ENCODE measurements at regions of chr12 and their contacts with region 1.

Region 1: GRCh38 chr12:12776261-12776660 is 9.2 kb upstream of the APOLD1 start:
- DNase-seq: no peak
- ATAC-seq: 0 out of 2 replicates have a peak, but pooled peaks have one; percentile 44
- H3K4me3 ChIP-seq: no peak overlapping the region
- H3K27ac ChIP-seq: no peak overlapping the region
- H3K4me1 ChIP-seq: peaks cover 11% of the 10 kb centered on the region
- H3K27me3 ChIP-seq: no peaks in the 10 kb centered on the region
- CTCF ChIP-seq: no peak

Region 2: GRCh38 chr12:12474931-12475795 is 301.1 kb before region 1 on chr12:
- CTCF ChIA-PET with region 1: no interaction called
- POLR2A ChIA-PET with region 1: no interaction called
- in situ Hi-C with region 1: no loop called
- intact Hi-C with region 1: no loop called
- DNase-seq: no peak
- ATAC-seq: no peak
- H3K4me3 ChIP-seq: no peak overlapping the region
- H3K27ac ChIP-seq: no peak overlapping the region
- H3K4me1 ChIP-seq: no peaks in the 10 kb centered on the region
- H3K27me3 ChIP-seq: no peaks in the 10 kb centered on the region
- CTCF ChIP-seq: no peak

Region 3: DNA sequence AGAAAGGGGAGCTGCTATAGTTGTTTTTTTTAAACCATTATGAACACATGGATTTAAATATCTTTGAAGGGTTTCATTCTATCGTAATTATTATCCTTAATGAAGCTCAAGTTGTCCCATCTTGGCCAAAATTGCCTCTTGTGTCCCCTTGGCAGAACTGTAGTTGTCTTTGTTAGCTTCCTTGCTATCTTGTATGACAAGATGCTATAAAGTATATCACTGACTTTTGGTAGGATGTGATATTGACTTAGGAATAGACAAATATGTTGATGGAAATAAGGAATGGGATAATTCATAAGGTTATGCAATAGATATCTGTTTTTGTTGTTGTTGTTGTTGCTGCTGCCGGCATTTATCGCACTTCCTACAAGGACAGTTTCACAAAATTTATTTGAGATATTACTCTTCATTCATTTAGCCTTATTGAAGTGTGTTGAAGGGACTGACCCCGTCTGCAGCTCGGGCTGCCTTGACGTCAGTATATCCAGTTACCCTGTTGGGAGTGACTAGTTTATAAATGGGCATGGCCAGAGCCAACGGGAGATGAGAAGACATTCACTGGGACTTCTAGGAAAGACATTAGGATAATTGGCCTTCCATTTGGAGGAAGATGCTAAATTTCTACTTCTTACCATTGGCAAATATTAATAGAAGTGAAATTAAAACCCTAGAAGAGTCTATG is 16.9 kb before region 1 on chr12:
- CTCF ChIA-PET with region 1: no interaction called
- POLR2A ChIA-PET with region 1: interaction called, 22 read pairs
- in situ Hi-C with region 1: no loop called
- intact Hi-C with region 1: no loop called
- DNase-seq: peak; percentile 54
- ATAC-seq: peak; percentile 62
- H3K4me3 ChIP-seq: peak overlapping the region; percentile 19 to 43; a peak in 3 of 4 replicates
- H3K27ac ChIP-seq: peak overlapping the region; percentile 94
- H3K4me1 ChIP-seq: peaks cover 25% of the 10 kb centered on the region
- H3K27me3 ChIP-seq: no peaks in the 10 kb centered on the region
- CTCF ChIP-seq: no peak

Region 4: DNA sequence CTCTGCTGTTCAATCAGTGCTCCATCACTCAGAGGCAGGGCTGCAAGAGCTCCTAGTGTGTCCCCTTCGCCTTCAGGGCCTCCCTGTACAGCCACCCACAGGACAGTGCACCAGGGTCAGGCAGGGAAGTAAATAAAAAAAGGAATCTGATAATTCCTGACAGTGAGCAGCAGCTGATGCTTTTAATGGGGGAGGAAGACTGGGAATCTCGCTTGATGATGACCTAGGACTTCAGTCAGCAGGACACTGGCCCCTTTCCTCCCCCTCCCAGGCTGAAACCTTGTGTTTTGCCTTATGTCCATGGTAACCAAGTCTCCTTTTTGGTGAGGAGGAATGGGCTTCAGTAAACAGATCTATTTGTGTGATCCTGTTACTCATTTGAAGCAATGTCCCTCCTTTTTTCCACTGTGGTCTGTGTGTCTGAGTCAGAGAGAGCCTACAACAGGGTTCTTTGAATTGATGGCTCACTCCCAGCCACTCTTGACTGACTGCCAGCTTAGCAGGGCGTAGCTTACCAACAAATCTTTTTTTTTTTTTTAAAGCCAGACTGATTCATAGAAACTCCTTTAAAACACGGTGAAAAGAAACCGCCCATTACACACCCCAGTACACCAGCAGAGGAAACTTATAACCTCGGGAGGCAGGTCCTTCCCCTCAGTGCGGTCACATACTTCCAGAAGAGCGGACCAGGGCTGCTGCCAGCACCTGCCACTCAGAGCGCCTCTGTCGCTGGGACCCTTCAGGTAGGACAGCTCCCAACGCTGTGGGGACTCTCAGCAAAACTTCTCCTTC is 420.1 kb after region 1 on chr12 and contains the start of gene EMP1:
- CTCF ChIA-PET with region 1: no interaction called
- POLR2A ChIA-PET with region 1: no interaction called
- in situ Hi-C with region 1: no loop called
- intact Hi-C with region 1: no loop called
- DNase-seq: peak; percentile 91
- ATAC-seq: peak; percentile 89
- H3K4me3 ChIP-seq: peak within 1 kb of the TSS; percentile 45 to 57
- H3K27ac ChIP-seq: peak within 1 kb of the TSS; percentile 79
- H3K4me1 ChIP-seq: peaks cover 9% of the 10 kb centered on the region
- H3K27me3 ChIP-seq: no peaks in the 10 kb centered on the region
- CTCF ChIP-seq: no peak
- total RNA-seq, gene EMP1: 18.6 TPM